PC-9 (cell line): ENCODE measurements at regions of chr2 and their contacts with region 1.

Region 1: DNA sequence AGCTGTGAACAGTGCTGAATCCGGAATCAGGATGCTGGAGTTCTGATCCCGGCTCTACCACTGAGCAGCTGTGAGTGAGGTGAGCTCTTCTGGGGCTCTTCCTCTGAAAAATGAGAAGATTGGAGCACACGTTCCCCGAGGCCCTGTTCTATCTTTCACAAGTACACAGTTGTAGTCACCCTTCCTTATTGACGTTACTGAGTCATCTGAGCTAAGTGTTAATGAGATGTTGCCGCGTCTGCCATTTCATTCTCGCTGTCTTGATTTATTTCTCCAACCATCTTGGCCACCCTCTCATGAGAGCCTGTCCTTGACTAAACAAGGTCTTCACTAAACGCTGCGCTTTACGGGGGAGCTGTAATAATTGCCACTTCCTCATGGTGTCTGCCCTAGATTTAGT is 31.9 kb upstream of the EFR3B start:
- DNase-seq: peak in 1 of 2 experiments; percentile 81
- H3K4me3 ChIP-seq: no peak overlapping the region
- H3K27ac ChIP-seq: no peak overlapping the region
- H3K4me1 ChIP-seq: 0 out of 2 replicates have a peak, but pooled peaks cover 3% of the 10 kb centered on the region
- H3K27me3 ChIP-seq: no peaks in the 10 kb centered on the region
- CTCF ChIP-seq: no peak

Region 2: GRCh38 chr2:25098670-25099486 is 88.9 kb after region 1 on chr2:
- CTCF ChIA-PET with region 1: no interaction called
- POLR2A ChIA-PET with region 1: interaction called, 11 read pairs
- intact Hi-C with region 1: no loop called
- DNase-seq: no peak
- H3K4me3 ChIP-seq: no peak overlapping the region
- H3K27ac ChIP-seq: no peak overlapping the region
- H3K4me1 ChIP-seq: no peaks in the 10 kb centered on the region
- H3K27me3 ChIP-seq: peaks cover 22% of the 10 kb centered on the region
- CTCF ChIP-seq: no peak